Activated naive CD8-positive, alpha-beta T cell treated with anti-CD3 and anti-CD28 coated beads, Interleukin-2, amount 10 ng/mL, durations not matched to agents 7 days and 5 days (primary cell): ENCODE measurements at regions of chr19 and their contacts with region 1.

Region 1: DNA sequence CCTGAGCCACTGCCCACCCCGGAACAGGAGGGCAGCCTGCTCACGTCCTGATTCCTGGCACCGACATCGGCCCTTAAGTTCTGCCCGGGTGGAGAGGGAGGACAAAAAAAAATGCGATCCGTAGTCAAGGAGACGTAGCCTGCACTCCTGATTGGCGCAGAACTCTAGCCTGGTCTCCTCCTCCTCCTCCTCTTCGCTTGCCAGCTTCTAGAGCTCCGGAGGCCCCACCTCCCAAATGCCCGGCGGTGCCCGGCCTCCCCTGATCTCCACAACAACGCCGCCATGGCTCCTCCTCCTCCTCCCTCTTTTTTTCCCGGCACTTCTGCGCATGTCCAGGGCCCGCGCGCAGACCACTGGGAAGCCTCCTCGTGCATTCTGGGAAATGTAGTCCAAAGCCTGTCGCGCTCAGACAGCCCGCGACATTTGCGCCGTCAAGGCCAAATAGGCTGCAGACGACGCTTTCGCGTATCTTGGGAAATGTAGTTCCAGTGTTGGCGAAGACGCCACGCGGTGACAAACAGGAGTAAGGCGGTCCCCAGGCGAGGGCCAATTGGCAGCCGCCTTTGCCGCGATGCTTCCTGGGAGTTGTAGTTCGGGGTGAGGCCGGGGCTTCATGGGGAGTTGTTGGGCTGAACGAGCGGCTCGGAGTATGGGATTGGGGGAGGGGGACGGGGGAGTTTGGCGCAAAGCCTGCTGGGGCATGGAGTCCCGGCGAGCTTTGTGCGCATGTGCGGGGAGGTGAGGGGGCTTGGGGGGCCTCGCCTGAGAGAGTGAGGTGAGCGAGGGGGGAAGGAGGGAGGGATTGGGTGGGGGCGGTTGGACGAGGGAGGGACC is at the start of gene ZNF444:
- DNase-seq: peak; percentile 95
- ATAC-seq: peak; percentile 88
- H3K4me3 Mint-ChIP-seq: peak within 1 kb of the TSS; percentile 88
- H3K27ac Mint-ChIP-seq: peak within 1 kb of the TSS; percentile 88
- H3K4me1 Mint-ChIP-seq: peaks cover 29% of the 10 kb centered on the region
- H3K27me3 Mint-ChIP-seq: no peaks in the 10 kb centered on the region
- total RNA-seq, gene ZNF444: 31.7 to 37.4 TPM

Region 2: DNA sequence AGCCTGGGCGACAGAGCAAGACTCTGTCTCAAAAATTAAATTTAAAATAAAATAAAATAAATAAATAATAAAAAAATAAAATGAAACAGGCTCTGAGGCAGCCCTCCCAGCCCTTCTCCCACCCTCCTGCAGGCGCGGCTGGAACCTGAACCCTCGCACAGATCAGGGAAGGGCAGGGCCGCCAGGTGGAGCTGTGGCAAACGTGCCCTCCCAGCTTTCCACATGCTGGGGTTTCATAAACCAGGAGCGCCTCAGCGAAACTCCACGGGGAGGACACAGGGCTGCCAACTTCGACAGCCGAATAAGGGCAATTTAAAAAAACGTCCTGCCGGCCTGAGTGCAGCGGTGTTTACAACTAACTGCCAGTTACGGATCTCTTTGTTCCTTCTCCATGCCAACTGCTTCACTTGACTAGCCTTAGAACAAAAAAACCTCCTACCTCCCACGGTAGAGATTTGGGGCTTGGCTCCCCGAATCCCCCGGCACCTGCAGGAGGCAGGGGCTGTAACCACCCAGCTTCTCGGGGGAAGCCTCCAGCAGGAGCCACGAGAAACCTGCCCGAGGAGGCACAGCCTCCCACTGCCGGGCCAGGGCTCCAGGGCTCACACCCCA is 35.6 kb before region 1 on chr19:
- POLR2A ChIA-PET with region 1: no interaction called
- DNase-seq: peak; percentile 64
- ATAC-seq: peak; percentile 68
- H3K4me3 Mint-ChIP-seq: no peak overlapping the region
- H3K27ac Mint-ChIP-seq: peak overlapping the region; percentile 48
- H3K4me1 Mint-ChIP-seq: peaks cover 20% of the 10 kb centered on the region
- H3K27me3 Mint-ChIP-seq: no peaks in the 10 kb centered on the region

Region 3: GRCh38 chr19:56121180-56122167 is 19.3 kb before region 1 on chr19 and contains the start of gene ZNF787:
- POLR2A ChIA-PET with region 1: interaction called, 35 read pairs
- DNase-seq: peak; percentile 98
- ATAC-seq: peak; percentile 91
- H3K4me3 Mint-ChIP-seq: peak within 1 kb of the TSS; percentile 92
- H3K27ac Mint-ChIP-seq: peak within 1 kb of the TSS; percentile 96
- H3K4me1 Mint-ChIP-seq: peaks cover 27% of the 10 kb centered on the region
- H3K27me3 Mint-ChIP-seq: no peaks in the 10 kb centered on the region
- total RNA-seq, gene ZNF787: 29.1 to 32.2 TPM

Region 4: GRCh38 chr19:56174550-56174949 is 33.8 kb after region 1 on chr19:
- POLR2A ChIA-PET with region 1: no interaction called
- DNase-seq: no peak
- ATAC-seq: no peak
- H3K4me3 Mint-ChIP-seq: no peak overlapping the region
- H3K27ac Mint-ChIP-seq: no peak overlapping the region
- H3K4me1 Mint-ChIP-seq: peaks cover 3% of the 10 kb centered on the region
- H3K27me3 Mint-ChIP-seq: peaks cover 2% of the 10 kb centered on the region